ENCODE measurements at regions of chr9 and their contacts with region 1.

Region 1: DNA sequence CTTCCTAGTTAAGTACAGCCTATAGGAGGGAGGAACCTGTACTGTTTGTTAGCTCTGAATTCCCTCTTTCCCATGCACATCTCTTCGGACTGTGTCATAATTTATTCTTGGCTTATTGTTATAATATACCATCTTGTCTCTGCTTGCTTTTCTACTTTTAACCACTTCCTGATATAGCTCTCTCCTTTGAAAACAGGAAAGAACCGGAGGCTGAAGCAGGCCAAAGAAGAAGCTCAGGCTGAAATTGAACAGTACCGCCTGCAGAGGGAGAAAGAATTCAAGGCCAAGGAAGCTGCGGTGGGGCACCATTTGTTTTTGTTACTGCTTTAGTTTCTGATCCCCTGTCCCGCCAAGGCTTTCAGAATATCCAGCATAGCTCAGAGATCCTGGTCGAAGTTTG is 4.8 kb downstream of the ATP6V1G1 start:
- DNase-seq: no peak
- H3K4me3 ChIP-seq: peak overlapping the region in 1 of 3 donors; percentile 42
- H3K27ac ChIP-seq: peak overlapping the region; percentile 60 to 65
- H3K4me1 ChIP-seq: peaks cover 0 to 17% of the 10 kb centered on the region in 2 donors
- H3K27me3 ChIP-seq: no peaks in the 10 kb centered on the region
- CTCF ChIP-seq: peak; percentile 4 to 50 (median 29)
- POLR2A ChIP-seq: no peak

Region 2: GRCh38 chr9:115114546-115114945 is 522.2 kb after region 1 on chr9:
- intact Hi-C with region 1: loop called (anchors 5 kb)
- DNase-seq: no peak
- H3K4me3 ChIP-seq: no peak overlapping the region
- H3K27ac ChIP-seq: peak overlapping the region; percentile 10 to 37
- H3K4me1 ChIP-seq: no peaks in the 10 kb centered on the region
- H3K27me3 ChIP-seq: no peaks in the 10 kb centered on the region
- CTCF ChIP-seq: no peak
- POLR2A ChIP-seq: no peak